Dorsolateral prefrontal cortex (tissue), 120 donors: ENCODE measurements at regions of chr17 and their contacts with region 1.

Region 1: DNA sequence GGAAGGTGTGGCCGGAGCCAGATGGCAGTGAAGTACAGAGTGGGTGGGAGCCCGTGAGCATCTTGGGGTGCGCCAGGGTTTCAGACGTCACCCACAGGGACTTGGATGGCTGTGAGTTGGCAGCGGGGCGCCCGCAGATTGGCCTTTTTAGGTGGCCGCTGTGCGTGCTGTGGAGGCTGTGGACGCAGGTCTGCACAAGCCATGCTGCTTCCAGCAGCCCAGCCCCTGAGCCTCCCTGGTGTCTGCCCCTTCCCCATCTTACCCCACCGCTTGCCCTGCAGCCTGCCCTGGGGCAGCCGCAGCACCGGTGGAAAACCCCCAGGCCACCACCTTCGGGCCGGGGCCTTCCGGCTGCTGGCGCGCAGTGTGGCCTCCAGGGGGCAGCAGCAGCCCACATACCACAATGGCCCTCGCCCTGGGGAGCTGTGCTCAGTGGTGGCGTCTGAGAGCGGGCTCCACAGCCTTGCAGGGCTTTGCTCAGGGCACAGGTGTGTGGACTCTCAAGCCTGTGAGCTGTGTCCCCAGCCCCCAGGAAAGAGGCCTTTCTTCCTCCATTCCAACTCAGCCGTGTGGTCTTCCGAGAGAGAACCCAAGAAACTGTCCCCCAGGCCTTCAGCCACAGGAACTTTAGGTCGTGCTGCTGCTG is 11.8 kb downstream of the ENDOV start:
- DNase-seq: peak; percentile 59 to 90 (median 73)
- H3K4me3 ChIP-seq: peak overlapping the region in 2 of 59 donors; percentile 1 to 6
- H3K27ac ChIP-seq: peak overlapping the region in 4 of 59 donors; percentile 18 to 72 (median 34)
- H3K27me3 ChIP-seq: no peaks in the 10 kb centered on the region
- CTCF ChIP-seq: peak; percentile 80 to 100 (median 98)

Region 2: DNA sequence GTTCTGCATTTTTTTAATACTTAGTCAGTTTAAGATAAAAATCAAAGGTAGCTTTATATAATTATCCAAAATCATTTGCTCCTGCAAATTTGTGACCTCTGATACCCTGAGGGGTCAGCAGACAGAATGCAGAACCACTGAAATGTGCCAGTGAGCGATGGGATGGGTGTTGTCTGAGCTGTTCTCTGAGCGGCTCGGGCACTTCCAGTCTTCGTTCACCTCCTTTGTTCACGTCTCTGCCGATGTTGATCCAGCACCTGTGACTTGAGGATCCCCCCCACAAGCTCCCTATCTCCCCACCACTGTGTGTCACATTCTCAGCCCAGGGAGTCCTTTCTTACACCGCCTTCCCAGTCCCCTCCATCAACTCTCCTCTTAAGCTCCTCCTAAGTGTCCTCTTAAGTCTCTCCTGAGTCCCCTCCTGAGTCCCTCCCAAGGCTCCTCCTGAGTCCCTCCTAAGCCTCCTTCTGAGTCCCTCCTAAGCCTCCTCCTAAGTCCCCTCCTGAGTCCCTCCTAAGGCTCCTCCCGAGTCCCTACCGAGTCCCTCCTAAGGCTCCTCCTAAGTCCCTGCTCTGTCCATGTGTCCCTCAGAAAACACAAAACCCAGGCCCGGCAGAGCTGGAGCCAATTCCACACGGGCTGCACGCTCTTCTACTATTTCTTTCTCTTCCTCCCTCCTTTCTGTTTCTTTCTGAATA is 118.7 kb before region 1 on chr17:
- intact Hi-C with region 1: no loop called
- DNase-seq: no peak
- H3K4me3 ChIP-seq: no peak overlapping the region
- H3K27ac ChIP-seq: no peak overlapping the region
- H3K27me3 ChIP-seq: no peaks in the 10 kb centered on the region
- CTCF ChIP-seq: no peak

Region 3: GRCh38 chr17:80575057-80575875 is 148.5 kb after region 1 on chr17:
- intact Hi-C with region 1: loop called in 1 of 2 experiments (anchors 10 kb)
- DNase-seq: peak in 8 of 10 donors; percentile 28 to 74 (median 55)
- H3K4me3 ChIP-seq: no peak overlapping the region
- H3K27ac ChIP-seq: no peak overlapping the region
- H3K27me3 ChIP-seq: no peaks in the 10 kb centered on the region
- CTCF ChIP-seq: peak; percentile 30 to 92 (median 80)

Region 4: DNA sequence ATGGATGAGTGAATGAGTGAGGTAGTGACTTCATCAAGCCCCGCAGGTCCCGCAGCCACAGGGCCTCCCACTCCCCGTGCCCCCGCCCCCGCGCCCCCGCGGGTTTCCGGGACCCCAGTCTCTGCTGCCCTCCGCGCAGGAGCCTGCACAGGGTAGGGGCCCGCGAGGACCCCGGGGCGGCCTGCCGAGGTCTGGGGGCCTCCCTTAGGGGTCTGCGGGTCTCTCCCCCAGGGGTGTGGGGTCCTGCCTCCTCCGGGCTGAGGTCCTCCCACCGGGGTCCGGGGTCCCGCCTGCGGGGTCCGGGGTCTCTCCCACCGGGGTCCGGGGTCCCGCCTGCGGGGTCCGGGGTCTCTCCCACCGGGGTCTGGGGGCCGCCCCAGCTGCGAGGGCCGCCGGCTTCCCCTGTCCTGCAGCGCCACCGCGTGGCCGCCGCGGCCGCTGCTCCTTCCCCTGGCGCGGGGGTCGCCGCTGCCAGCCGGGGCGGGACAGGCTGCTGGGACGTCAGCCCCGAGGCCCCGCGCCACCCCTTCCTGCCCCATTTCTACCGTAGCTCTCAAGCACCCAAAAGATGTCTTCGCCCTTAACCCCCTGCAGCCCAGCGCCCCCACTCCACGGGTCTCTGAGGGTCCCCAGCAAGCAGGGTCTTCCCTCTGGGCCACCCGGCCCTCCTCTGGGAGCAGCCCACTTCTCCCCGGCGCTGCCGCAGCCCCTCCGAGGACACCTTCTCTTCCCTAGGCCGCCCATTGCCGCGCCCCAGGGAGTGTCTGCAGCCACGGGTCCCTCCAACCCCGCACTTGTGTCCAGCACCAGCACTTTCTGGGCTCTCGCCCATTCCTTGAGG is 554.5 kb after region 1 on chr17:
- intact Hi-C with region 1: loop called (anchors 2 to 5 kb)
- DNase-seq: peak in 1 of 10 donors; percentile 53
- H3K4me3 ChIP-seq: peak overlapping the region in 53 of 59 donors; percentile 22 to 65 (median 43)
- H3K27ac ChIP-seq: no peak overlapping the region
- H3K27me3 ChIP-seq: peaks cover 0 to 4% (median 0%) of the 10 kb centered on the region in 45 donors
- CTCF ChIP-seq: peak; percentile 36 to 96 (median 84)

Region 5: GRCh38 chr17:81101614-81102306 is 675.0 kb after region 1 on chr17:
- intact Hi-C with region 1: loop called in 1 of 2 experiments (anchors 5 kb)
- DNase-seq: peak; percentile 68 to 89 (median 77)
- H3K4me3 ChIP-seq: peak overlapping the region in 4 of 59 donors; percentile 1 to 30 (median 10)
- H3K27ac ChIP-seq: peak overlapping the region in 41 of 59 donors; percentile 6 to 84 (median 55)
- H3K27me3 ChIP-seq: no peaks in the 10 kb centered on the region
- CTCF ChIP-seq: peak; percentile 92 to 100 (median 100)